ENCODE measurements at regions of chr14 and their contacts with region 1.

Region 1: GRCh38 chr14:95196290-95196689 is 39.0 kb upstream of the DICER1 start:
- DNase-seq: peak in 2 of 9 experiments; percentile 28 to 47
- ATAC-seq: peak; percentile 64
- H3K4me3 ChIP-seq: no peak overlapping the region
- H3K4me3 Mint-ChIP-seq: no peak overlapping the region
- H3K27ac ChIP-seq: no peak overlapping the region
- H3K27ac Mint-ChIP-seq: no peak overlapping the region
- H3K4me1 ChIP-seq: no peaks in the 10 kb centered on the region
- H3K4me1 Mint-ChIP-seq: peaks cover 2% of the 10 kb centered on the region
- H3K27me3 ChIP-seq: no peaks in the 10 kb centered on the region
- H3K27me3 Mint-ChIP-seq: no peaks in the 10 kb centered on the region
- CTCF ChIP-seq: peak; percentile 44

Region 2: GRCh38 chr14:94689218-94689984 is 506.9 kb before region 1 on chr14:
- CTCF ChIA-PET with region 1: interaction called, 3 read pairs
- POLR2A ChIA-PET with region 1: no interaction called
- intact Hi-C with region 1: loop called (anchors 2 to 5 kb)
- DNase-seq: peak; percentile 10 to 54 (median 30)
- ATAC-seq: peak; percentile 49
- H3K4me3 ChIP-seq: no peak overlapping the region
- H3K4me3 Mint-ChIP-seq: no peak overlapping the region
- H3K27ac ChIP-seq: no peak overlapping the region
- H3K27ac Mint-ChIP-seq: no peak overlapping the region
- H3K4me1 ChIP-seq: no peaks in the 10 kb centered on the region
- H3K4me1 Mint-ChIP-seq: peaks cover 2% of the 10 kb centered on the region
- H3K27me3 ChIP-seq: no peaks in the 10 kb centered on the region
- H3K27me3 Mint-ChIP-seq: peaks cover 22% of the 10 kb centered on the region
- CTCF ChIP-seq: peak; percentile 72

Region 3: DNA sequence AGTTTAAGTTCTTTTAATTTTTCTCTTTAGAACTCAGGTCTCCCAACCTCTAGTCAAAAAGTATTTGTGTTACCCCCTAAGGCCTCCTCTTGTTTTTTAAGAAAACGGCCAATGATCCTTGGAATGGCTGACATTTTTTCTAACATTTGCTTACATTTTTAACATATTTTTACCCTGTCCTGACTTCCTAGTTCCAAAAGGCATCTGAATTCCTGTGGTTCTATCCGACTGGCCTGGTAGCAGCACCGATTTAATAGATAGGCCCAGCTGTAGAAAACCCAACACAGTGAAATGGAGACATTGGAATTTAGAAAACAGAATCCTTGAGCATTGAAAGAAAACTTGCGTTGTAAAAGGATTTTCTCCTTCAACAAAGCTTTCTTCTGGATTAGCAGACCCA is 291.7 kb before region 1 on chr14:
- CTCF ChIA-PET with region 1: no interaction called
- POLR2A ChIA-PET with region 1: no interaction called
- intact Hi-C with region 1: loop called in 1 of 2 experiments (anchors 10 kb)
- DNase-seq: no peak
- ATAC-seq: no peak
- H3K4me3 ChIP-seq: no peak overlapping the region
- H3K4me3 Mint-ChIP-seq: no peak overlapping the region
- H3K27ac ChIP-seq: no peak overlapping the region
- H3K27ac Mint-ChIP-seq: no peak overlapping the region
- H3K4me1 ChIP-seq: no peaks in the 10 kb centered on the region
- H3K4me1 Mint-ChIP-seq: no peaks in the 10 kb centered on the region
- H3K27me3 ChIP-seq: no peaks in the 10 kb centered on the region
- H3K27me3 Mint-ChIP-seq: peaks cover 10% of the 10 kb centered on the region
- CTCF ChIP-seq: no peak